ENCODE measurements at regions of chr17 and their contacts with region 1.

Region 1: GRCh38 chr17:40417609-40418427 is at the start of gene TOP2A:
- DNase-seq: peak; percentile 98
- H3K4me3 ChIP-seq: peak within 1 kb of the TSS; percentile 90
- H3K27ac ChIP-seq: peak within 1 kb of the TSS; percentile 86
- H3K4me1 ChIP-seq: peaks cover 16% of the 10 kb centered on the region
- H3K27me3 ChIP-seq: no peaks in the 10 kb centered on the region
- CTCF ChIP-seq: no peak
- total RNA-seq, gene TOP2A: 188 and 216 TPM in 2 replicates

Region 2: DNA sequence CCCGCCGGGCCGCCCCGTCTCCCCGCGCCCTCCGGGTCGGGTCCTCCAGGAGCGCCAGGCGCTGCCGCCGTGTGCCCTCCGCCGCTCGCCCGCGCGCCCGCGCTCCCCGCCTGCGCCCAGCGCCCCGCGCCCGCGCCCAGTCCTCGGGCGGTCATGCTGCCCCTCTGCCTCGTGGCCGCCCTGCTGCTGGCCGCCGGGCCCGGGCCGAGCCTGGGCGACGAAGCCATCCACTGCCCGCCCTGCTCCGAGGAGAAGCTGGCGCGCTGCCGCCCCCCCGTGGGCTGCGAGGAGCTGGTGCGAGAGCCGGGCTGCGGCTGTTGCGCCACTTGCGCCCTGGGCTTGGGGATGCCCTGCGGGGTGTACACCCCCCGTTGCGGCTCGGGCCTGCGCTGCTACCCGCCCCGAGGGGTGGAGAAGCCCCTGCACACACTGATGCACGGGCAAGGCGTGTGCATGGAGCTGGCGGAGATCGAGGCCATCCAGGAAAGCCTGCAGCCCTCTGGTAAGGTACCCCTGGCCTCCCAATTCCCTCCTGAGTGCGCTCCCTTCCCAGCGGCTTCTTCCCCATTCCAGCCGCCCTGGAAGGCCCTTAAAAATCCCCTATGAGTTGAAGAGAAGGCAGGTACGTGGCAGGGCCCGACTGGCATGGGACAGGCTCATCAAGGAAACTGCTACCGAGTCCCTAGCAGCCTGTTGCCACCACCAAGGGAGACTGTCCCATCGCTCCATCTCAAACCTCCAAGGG is 25.9 kb after region 1 on chr17:
- CTCF ChIA-PET with region 1: no interaction called
- POLR2A ChIA-PET with region 1: interaction called, 11 read pairs
- intact Hi-C with region 1: no loop called
- DNase-seq: peak; percentile 63
- H3K4me3 ChIP-seq: peak overlapping the region; percentile 44
- H3K27ac ChIP-seq: no peak overlapping the region
- H3K4me1 ChIP-seq: no peaks in the 10 kb centered on the region
- H3K27me3 ChIP-seq: no peaks in the 10 kb centered on the region
- CTCF ChIP-seq: 0 out of 2 replicates have a peak, but pooled peaks have one; percentile 24

Region 3: DNA sequence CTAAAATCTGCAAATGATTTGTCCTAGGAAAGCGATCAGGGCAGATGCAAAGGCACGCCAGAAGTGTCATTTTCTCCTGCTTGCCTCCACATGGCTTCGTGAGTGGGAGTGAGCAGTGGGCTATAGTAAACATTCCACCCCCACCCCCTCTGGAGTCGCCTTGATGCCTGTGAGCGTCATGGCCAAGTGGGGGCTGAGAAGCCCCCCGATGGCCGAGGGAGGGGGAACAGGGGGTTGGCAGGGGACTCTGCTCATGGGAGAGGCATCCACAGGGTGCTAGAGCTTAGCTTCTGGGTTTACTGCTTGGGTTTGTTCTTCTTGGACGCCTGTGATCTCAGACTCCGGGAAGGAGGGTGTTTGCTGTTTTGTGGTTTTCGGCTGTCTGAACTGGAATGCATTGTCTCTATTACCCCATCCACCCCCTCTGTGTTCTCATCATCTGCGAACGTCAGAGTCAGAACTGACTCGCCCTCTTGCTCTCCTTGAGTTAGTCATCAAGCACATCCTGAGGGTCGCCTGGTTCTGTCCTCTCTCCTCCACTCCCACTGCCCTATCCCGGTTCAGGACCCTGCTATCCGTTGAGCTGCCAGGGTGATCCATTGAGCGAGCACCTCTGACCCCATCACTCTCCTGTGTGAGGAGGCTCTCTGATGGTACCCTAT is 68.2 kb after region 1 on chr17:
- CTCF ChIA-PET with region 1: no interaction called
- POLR2A ChIA-PET with region 1: no interaction called
- intact Hi-C with region 1: no loop called
- DNase-seq: peak; percentile 32
- H3K4me3 ChIP-seq: no peak overlapping the region
- H3K27ac ChIP-seq: no peak overlapping the region
- H3K4me1 ChIP-seq: no peaks in the 10 kb centered on the region
- H3K27me3 ChIP-seq: no peaks in the 10 kb centered on the region
- CTCF ChIP-seq: no peak